ENCODE measurements at regions of chr17 and their contacts with region 1.

Region 1: DNA sequence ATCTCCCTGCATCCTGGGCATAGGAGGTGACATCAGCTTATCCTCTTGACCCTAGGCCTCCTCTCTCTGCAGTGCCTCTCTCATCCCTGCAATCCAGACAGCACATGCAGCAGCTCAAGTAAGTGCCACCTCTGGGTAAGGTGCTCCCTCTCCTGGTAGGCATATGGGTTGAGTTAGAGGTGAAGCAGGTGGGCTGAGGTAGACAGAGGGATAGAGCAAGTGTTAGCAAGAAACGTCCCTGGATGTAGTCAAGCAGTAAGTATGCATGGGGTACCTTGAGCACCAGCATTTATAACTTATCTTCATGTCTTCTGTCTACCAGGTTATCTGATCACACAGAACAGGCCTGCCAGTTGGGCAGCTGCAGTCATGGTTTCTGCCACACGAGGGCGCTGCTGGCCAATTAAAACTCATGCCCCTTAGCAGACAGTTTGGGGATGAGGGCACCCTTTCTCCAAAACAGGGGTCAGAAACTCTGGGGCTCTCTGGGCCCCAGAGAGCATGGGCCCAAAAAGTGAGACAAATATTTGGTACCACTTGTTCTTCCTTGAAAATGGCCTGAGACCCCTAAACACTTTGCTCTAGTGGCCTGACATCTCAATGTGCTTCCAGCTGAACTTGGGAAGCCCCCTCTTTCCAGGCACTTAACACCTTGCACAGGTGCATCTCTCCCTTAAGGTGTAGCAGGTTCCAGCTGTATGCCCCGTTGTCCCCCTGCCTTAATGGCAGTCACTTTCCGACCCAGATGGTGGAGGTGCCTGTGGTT is 59.8 kb downstream of the NEUROD2 start:
- DNase-seq: peak; percentile 66 to 85 (median 73)
- ATAC-seq: peak; percentile 89
- H3K4me3 ChIP-seq: no peak overlapping the region
- H3K4me3 Mint-ChIP-seq: no peak overlapping the region
- H3K27ac ChIP-seq: no peak overlapping the region
- H3K27ac Mint-ChIP-seq: no peak overlapping the region
- H3K4me1 ChIP-seq: no peaks in the 10 kb centered on the region
- H3K4me1 Mint-ChIP-seq: no peaks in the 10 kb centered on the region
- H3K27me3 ChIP-seq: no peaks in the 10 kb centered on the region
- H3K27me3 Mint-ChIP-seq: no peaks in the 10 kb centered on the region
- CTCF ChIP-seq: peak; percentile 84

Region 2: DNA sequence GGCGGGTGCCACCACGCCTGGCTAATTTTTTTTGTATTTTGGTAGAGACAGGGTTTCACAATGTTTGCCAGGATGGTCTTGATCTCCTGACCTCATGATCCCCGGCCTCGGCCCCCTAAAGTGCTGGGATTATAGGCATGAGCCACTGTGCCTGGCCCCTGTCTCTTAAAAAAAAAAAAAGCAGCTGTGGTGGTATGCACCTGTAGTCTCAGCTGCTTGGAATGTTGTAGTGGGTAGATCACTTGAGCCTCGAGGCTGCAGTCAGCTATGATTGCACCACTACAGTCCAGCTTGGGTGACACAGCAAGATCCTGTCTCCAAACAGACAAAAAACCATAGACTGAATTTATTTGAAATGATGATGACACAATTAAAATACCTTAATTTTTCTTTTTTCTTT is 62.3 kb before region 1 on chr17:
- CTCF ChIA-PET with region 1: no interaction called
- POLR2A ChIA-PET with region 1: no interaction called
- intact Hi-C with region 1: no loop called
- DNase-seq: no peak
- ATAC-seq: no peak
- H3K4me3 ChIP-seq: no peak overlapping the region
- H3K4me3 Mint-ChIP-seq: no peak overlapping the region
- H3K27ac ChIP-seq: no peak overlapping the region
- H3K27ac Mint-ChIP-seq: no peak overlapping the region
- H3K4me1 ChIP-seq: no peaks in the 10 kb centered on the region
- H3K4me1 Mint-ChIP-seq: peaks cover 8% of the 10 kb centered on the region
- H3K27me3 ChIP-seq: no peaks in the 10 kb centered on the region
- H3K27me3 Mint-ChIP-seq: no peaks in the 10 kb centered on the region
- CTCF ChIP-seq: no peak

Region 3: DNA sequence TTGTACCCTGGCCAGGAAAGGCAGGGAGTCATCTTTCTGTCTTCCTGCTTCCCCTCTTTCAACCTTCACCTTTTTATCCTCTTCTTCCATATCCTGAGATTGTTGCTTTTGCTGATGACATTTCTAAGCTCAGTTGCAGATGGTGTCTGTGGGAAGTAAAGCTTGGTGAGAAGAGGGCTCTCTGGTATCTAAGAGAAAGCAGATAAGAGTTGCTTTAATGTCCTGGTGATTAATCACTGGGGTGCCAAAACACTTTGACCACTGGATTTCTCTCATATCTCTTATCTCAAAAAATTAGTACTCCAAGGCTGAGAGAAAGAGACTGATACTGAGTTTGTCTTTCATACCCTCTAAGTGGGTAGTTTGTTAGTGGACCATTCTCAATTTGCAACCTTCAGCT is 11.4 kb before region 1 on chr17:
- CTCF ChIA-PET with region 1: interaction called, 19 read pairs
- POLR2A ChIA-PET with region 1: no interaction called
- intact Hi-C with region 1: no loop called
- DNase-seq: no peak
- ATAC-seq: no peak
- H3K4me3 ChIP-seq: no peak overlapping the region
- H3K4me3 Mint-ChIP-seq: no peak overlapping the region
- H3K27ac ChIP-seq: no peak overlapping the region
- H3K27ac Mint-ChIP-seq: no peak overlapping the region
- H3K4me1 ChIP-seq: peaks cover 6% of the 10 kb centered on the region
- H3K4me1 Mint-ChIP-seq: peaks cover 22% of the 10 kb centered on the region
- H3K27me3 ChIP-seq: no peaks in the 10 kb centered on the region
- H3K27me3 Mint-ChIP-seq: no peaks in the 10 kb centered on the region
- CTCF ChIP-seq: no peak

Region 4: GRCh38 chr17:39566094-39566850 is 18.4 kb after region 1 on chr17:
- CTCF ChIA-PET with region 1: interaction called, 11 read pairs
- POLR2A ChIA-PET with region 1: no interaction called
- intact Hi-C with region 1: no loop called
- DNase-seq: no peak
- ATAC-seq: no peak
- H3K4me3 ChIP-seq: no peak overlapping the region
- H3K4me3 Mint-ChIP-seq: no peak overlapping the region
- H3K27ac ChIP-seq: no peak overlapping the region
- H3K27ac Mint-ChIP-seq: no peak overlapping the region
- H3K4me1 ChIP-seq: no peaks in the 10 kb centered on the region
- H3K4me1 Mint-ChIP-seq: no peaks in the 10 kb centered on the region
- H3K27me3 ChIP-seq: no peaks in the 10 kb centered on the region
- H3K27me3 Mint-ChIP-seq: no peaks in the 10 kb centered on the region
- CTCF ChIP-seq: no peak

Region 5: GRCh38 chr17:40287494-40288369 is 739.8 kb after region 1 on chr17 and contains the start of gene CDC6:
- CTCF ChIA-PET with region 1: no interaction called
- POLR2A ChIA-PET with region 1: no interaction called
- intact Hi-C with region 1: no loop called
- DNase-seq: peak; percentile 97 to 99 (median 98)
- ATAC-seq: peak; percentile 91
- H3K4me3 ChIP-seq: peak within 1 kb of the TSS; percentile 73 to 84
- H3K4me3 Mint-ChIP-seq: peak within 1 kb of the TSS; percentile 97
- H3K27ac ChIP-seq: peak within 1 kb of the TSS; percentile 21 to 36
- H3K27ac Mint-ChIP-seq: peak within 1 kb of the TSS; percentile 89
- H3K4me1 ChIP-seq: peaks cover 5% of the 10 kb centered on the region
- H3K4me1 Mint-ChIP-seq: peaks cover 22% of the 10 kb centered on the region
- H3K27me3 ChIP-seq: no peaks in the 10 kb centered on the region
- H3K27me3 Mint-ChIP-seq: no peaks in the 10 kb centered on the region
- CTCF ChIP-seq: no peak
- total RNA-seq, gene CDC6: 2.0 to 2.9 TPM